ENCODE measurements at regions of chr16 and their contacts with region 1.

Region 1: GRCh38 chr16:50210266-50211038 is 55.9 kb upstream of the ADCY7 start:
- DNase-seq: peak; percentile 62
- H3K4me3 ChIP-seq: no peak overlapping the region
- H3K27ac ChIP-seq: no peak overlapping the region
- H3K4me1 ChIP-seq: peaks cover 36% of the 10 kb centered on the region
- H3K27me3 ChIP-seq: no peaks in the 10 kb centered on the region
- CTCF ChIP-seq: peak; percentile 60 to 77

Region 2: GRCh38 chr16:49855280-49855821 is 355.1 kb before region 1 on chr16:
- CTCF ChIA-PET with region 1: no interaction called
- dilution Hi-C with region 1: no loop called
- in situ Hi-C with region 1: no loop called
- intact Hi-C with region 1: loop called (anchors 5 kb)
- DNase-seq: peak; percentile 71
- H3K4me3 ChIP-seq: peak overlapping the region; percentile 48 to 54 (median 52)
- H3K27ac ChIP-seq: no peak overlapping the region
- H3K4me1 ChIP-seq: peaks cover 12% of the 10 kb centered on the region
- H3K27me3 ChIP-seq: peaks cover 12% of the 10 kb centered on the region
- CTCF ChIP-seq: no peak

Region 3: GRCh38 chr16:50088302-50088701 is 122.2 kb before region 1 on chr16:
- CTCF ChIA-PET with region 1: interaction called, 3 read pairs
- dilution Hi-C with region 1: no loop called
- in situ Hi-C with region 1: no loop called
- intact Hi-C with region 1: loop called (anchors 5 kb)
- DNase-seq: peak; percentile 52
- H3K4me3 ChIP-seq: peak overlapping the region in 1 of 3 experiments; percentile 5
- H3K27ac ChIP-seq: peak overlapping the region; percentile 15
- H3K4me1 ChIP-seq: peaks cover 7% of the 10 kb centered on the region
- H3K27me3 ChIP-seq: no peaks in the 10 kb centered on the region
- CTCF ChIP-seq: no peak

Region 4: DNA sequence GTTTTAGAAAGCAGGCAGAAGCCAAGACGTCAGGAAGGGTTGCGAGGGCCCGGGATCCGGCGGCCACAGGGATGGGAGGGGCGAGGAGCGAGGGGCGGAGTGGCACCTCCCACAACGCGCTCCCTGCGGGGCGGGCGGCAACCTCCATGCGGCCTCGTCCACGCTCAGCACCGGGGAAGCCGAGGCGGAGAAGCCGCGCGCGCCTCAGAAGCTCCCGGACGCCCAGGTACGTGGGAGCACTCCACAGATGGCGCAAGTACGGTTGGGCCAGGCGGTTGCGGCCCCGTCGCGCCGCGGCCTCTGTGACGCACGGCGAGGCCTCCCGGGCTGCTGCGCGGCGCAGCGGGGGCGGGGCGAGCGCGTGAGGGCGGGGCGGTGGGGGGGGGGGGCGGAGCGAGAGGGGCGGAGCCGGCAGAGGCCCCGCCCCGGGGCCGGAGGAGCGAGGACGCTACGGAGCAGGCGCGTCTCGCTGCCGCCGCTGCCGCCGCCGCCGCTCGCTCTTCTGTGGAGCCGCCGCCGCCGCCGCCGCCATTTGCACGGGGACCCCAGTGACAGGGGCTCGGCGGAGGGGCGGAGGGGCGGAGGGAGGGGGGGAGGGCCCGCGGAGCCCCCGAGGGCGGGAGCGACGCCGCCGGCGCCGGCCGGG is 57.5 kb before region 1 on chr16 and contains the start of gene TENT4B:
- CTCF ChIA-PET with region 1: no interaction called
- dilution Hi-C with region 1: loop called (anchors 10 kb)
- in situ Hi-C with region 1: no loop called
- intact Hi-C with region 1: loop called (anchors 1 kb)
- DNase-seq: peak; percentile 79
- H3K4me3 ChIP-seq: peak within 1 kb of the TSS; percentile 69 to 99 (median 95)
- H3K27ac ChIP-seq: peak within 1 kb of the TSS; percentile 87
- H3K4me1 ChIP-seq: peaks cover 16% of the 10 kb centered on the region
- H3K27me3 ChIP-seq: no peaks in the 10 kb centered on the region
- CTCF ChIP-seq: no peak
- total RNA-seq, gene TENT4B: 10.3 to 14.5 TPM

Region 5: GRCh38 chr16:50326949-50327402 is 116.5 kb after region 1 on chr16:
- CTCF ChIA-PET with region 1: no interaction called
- dilution Hi-C with region 1: no loop called
- in situ Hi-C with region 1: loop called in 1 of 2 experiments (anchors 10 kb)
- intact Hi-C with region 1: loop called (anchors 10 kb)
- DNase-seq: peak; percentile 46
- H3K4me3 ChIP-seq: no peak overlapping the region
- H3K27ac ChIP-seq: no peak overlapping the region
- H3K4me1 ChIP-seq: no peaks in the 10 kb centered on the region
- H3K27me3 ChIP-seq: no peaks in the 10 kb centered on the region
- CTCF ChIP-seq: peak; percentile 38 to 59

Region 6: DNA sequence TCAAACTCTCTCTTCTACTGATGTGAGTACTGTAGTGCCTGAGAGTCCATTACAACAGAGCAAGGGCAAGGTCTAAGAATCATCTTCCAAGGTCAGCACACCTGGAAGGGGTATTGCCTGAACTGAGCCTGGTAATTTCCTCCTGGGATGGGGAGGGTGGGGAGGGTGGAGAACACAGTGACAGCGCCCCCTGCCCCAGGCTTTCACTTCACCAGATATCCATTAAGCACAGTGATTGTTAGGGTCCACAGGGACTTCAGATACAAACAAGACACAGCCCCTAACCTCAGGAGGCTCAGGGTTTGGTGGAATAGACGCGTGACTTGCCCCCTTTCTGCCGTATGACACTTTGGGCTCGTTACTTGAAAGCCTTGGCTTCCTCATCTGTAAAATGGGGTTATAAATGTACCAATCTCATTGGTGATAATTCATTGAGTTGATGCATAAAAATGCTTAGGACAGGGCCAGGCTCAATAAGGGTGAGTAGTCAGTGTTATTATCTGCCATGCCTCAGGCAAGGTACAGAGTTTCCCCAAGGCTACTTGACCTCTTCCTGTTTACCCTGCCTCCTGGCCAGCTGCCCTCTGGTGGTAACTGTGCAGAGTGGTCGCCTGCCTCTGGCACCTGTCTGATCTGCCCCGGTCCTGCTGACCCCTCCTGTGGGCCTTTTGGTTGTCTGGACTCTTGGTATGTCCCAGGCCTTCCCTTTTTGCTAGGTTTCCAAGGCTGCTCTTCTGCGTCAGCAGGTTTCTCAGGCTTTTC is 171.4 kb after region 1 on chr16:
- CTCF ChIA-PET with region 1: no interaction called
- dilution Hi-C with region 1: no loop called
- in situ Hi-C with region 1: no loop called
- intact Hi-C with region 1: no loop called
- DNase-seq: no peak
- H3K4me3 ChIP-seq: no peak overlapping the region
- H3K27ac ChIP-seq: no peak overlapping the region
- H3K4me1 ChIP-seq: no peaks in the 10 kb centered on the region
- H3K27me3 ChIP-seq: no peaks in the 10 kb centered on the region
- CTCF ChIP-seq: peak in 1 of 2 donors; percentile 2

Region 7: GRCh38 chr16:50665128-50665878 is 454.9 kb after region 1 on chr16:
- CTCF ChIA-PET with region 1: no interaction called
- dilution Hi-C with region 1: no loop called
- in situ Hi-C with region 1: loop called in 1 of 2 experiments (anchors 25 kb)
- intact Hi-C with region 1: loop called (anchors 1 kb)
- DNase-seq: peak; percentile 53
- H3K4me3 ChIP-seq: peak overlapping the region; percentile 22 to 30 (median 23)
- H3K27ac ChIP-seq: no peak overlapping the region
- H3K4me1 ChIP-seq: peaks cover 3% of the 10 kb centered on the region
- H3K27me3 ChIP-seq: no peaks in the 10 kb centered on the region
- CTCF ChIP-seq: peak; percentile 75 to 85